Gastrocnemius medialis (tissue), 4 donors: ENCODE measurements at regions of chr7 and their contacts with region 1.

Region 1: GRCh38 chr7:45923290-45923689 is 2.2 kb upstream of the IGFBP3 start:
- DNase-seq: peak in 1 of 2 donors; percentile 43
- ATAC-seq: peak in 1 of 2 donors; percentile 54
- H3K4me3 ChIP-seq: peak overlapping the region in 3 of 4 donors; percentile 30 to 55 (median 34)
- H3K27ac ChIP-seq: peak overlapping the region in 3 of 4 donors; percentile 33 to 64 (median 53)
- H3K4me1 ChIP-seq: peaks cover 7 to 25% of the 10 kb centered on the region in 2 donors
- H3K27me3 ChIP-seq: peaks cover 38 to 47% (median 39%) of the 10 kb centered on the region in 3 donors
- CTCF ChIP-seq: peak; percentile 62 to 84 (median 69)
- POLR2A ChIP-seq: no peak

Region 2: DNA sequence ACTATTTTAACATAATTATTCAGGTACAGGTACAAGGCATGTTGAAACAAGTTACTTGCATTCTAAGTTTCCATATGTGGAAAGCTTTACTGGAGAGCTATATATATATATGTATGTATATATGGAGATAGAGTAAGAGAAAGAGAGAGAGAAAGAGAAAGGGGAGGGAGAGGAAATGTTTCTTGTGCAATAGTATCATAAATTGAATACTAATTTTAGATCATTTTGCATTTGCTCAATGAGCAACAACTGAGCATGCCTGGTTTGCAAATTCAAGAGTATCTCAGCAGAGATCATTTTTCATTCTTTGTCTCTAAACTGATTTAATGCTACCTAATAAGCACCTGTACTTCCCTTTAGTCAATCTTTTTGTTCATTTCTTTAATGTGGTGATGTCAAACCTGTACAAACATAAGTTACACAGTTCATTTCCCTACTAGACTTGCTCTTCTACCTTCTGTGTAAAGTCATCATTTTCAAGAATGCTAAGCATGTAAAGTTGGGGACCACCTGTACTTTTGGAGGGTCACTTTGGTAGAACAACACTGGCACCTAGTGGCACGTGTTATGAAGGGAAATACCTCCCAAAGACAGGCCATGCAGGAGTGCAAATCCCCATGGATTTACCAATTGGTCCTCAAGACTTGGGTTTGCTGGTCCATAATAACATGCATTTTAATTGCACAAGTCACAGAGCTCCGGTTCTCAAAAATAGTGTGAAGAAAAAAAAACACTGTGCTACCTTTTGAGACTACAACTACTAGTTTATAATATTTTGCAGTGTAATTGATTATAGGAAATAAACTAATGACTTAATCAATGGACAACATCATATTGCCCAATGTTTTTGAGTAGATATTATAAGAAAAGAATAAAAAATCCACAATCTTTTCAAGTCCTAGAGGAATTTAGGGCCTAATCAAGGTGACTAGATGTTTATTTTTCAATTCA is 429.0 kb after region 1 on chr7:
- in situ Hi-C with region 1: loop called in 2 of 4 experiments (anchors 10 to 25 kb)
- intact Hi-C with region 1: loop called (anchors 10 kb)
- DNase-seq: no peak
- ATAC-seq: no peak
- H3K4me3 ChIP-seq: no peak overlapping the region
- H3K27ac ChIP-seq: no peak overlapping the region
- H3K4me1 ChIP-seq: no peaks in the 10 kb centered on the region
- H3K27me3 ChIP-seq: no peaks in the 10 kb centered on the region
- CTCF ChIP-seq: peak in 3 of 5 experiments; percentile 26 to 29 (median 28)
- POLR2A ChIP-seq: no peak

Region 3: DNA sequence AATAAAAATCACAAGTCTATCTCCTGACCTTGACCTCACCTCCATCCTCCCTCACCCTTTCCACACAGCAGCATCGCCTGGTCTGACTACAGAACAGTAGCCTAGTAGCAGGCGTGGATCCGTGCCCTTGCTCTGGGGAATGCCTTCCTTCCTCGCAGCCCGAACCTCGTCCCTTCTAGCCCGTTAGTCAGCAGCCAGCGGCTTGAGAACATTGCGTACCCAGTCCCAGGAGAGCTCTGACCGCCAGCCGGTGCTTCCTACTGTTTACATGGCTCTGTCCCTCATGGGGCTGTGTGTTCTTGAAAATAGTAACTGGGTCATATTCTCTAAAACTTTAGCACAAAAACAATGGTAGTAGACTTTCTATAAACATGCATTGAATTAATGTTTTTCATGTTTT is 680.5 kb after region 1 on chr7:
- in situ Hi-C with region 1: loop called in 1 of 4 experiments (anchors 5 kb)
- intact Hi-C with region 1: loop called (anchors 10 kb)
- DNase-seq: peak; percentile 93
- ATAC-seq: peak; percentile 86 to 89
- H3K4me3 ChIP-seq: no peak overlapping the region
- H3K27ac ChIP-seq: peak overlapping the region; percentile 72 to 90 (median 77)
- H3K4me1 ChIP-seq: peaks cover 23 to 32% of the 10 kb centered on the region in 2 donors
- H3K27me3 ChIP-seq: no peaks in the 10 kb centered on the region
- CTCF ChIP-seq: no peak
- POLR2A ChIP-seq: no peak

Region 4: DNA sequence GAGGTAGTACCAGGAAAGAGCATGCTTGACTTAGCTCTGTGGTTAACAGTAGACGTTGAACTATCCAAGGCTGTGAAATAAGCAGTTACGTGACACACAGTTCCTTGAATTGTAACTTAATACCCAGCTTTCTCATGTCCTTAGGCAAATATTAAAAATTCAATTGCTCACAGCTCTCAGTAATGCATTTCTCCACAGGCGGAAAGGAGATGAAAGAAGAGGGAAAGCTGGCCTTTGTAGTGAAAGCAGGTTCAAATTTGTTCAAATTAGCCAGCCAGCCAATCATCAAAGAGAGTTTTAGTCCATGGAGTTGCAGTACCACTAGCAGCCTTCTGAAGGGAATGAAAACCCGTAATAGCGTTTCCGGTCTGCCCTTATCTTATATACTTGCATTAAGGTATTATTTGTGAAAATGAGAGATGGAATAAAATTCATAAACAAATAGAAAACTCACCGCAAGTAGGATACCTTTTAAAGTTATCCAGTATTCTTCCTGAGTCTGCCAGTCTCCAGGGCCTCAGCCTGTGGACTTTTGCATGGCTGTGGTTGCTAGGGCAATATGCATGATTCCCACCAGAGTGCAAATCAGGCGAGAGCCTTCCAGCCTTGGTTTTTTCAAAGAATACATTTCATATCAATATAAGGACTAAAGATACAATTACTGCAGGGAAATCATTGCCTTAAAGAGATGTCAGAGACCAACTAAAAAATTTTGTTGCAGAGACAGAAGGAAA is 863.1 kb after region 1 on chr7:
- in situ Hi-C with region 1: no loop called
- intact Hi-C with region 1: loop called (anchors 10 kb)
- DNase-seq: no peak
- ATAC-seq: peak; percentile 56 to 58
- H3K4me3 ChIP-seq: no peak overlapping the region
- H3K27ac ChIP-seq: no peak overlapping the region
- H3K4me1 ChIP-seq: no peaks in the 10 kb centered on the region
- H3K27me3 ChIP-seq: no peaks in the 10 kb centered on the region
- CTCF ChIP-seq: no peak
- POLR2A ChIP-seq: no peak

Region 5: DNA sequence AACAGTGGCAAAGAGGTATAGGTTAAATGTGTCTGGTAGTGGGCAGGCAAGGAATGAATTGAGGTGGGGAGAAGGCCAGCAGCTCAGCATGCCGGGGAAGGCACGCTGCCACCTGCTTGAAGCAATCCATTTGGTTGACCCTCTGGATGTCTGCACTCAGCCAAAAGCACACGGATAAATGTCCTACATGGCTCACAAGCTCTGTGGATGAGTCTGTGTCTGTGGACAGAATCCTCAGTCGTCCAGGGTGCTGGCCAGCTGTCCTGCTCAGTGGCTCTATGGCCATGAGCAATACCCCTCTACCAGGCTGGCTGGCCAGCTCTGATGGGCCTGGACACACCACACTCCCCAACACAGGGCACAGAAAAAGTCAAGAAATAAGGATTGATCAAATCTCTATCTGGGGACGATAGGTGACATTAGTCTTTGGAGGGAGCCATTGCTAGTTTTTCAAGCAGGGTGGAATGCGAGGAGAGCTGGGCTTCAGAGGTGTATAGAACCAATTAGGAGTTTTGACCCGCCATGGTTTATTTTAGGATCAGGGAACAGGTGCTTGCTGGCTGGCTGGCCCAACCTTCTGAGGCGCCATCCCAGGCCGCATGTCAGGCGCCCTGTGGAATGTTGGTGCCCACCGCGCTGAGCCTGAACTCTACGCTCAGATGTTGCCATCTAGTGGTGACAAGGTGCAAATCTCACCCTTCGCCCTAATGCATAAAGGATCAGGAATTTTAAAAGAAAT is 1165.2 kb after region 1 on chr7:
- in situ Hi-C with region 1: loop called (anchors 5 to 10 kb)
- intact Hi-C with region 1: loop called (anchors 1 kb)
- DNase-seq: peak; percentile 23 to 67
- ATAC-seq: peak; percentile 84
- H3K4me3 ChIP-seq: no peak overlapping the region
- H3K27ac ChIP-seq: peak overlapping the region; percentile 26 to 66 (median 47)
- H3K4me1 ChIP-seq: peaks cover 10 to 13% of the 10 kb centered on the region in 2 donors
- H3K27me3 ChIP-seq: no peaks in the 10 kb centered on the region
- CTCF ChIP-seq: peak; percentile 78 to 90 (median 84)
- POLR2A ChIP-seq: no peak

Region 6: GRCh38 chr7:47179812-47180515 is 1256.7 kb after region 1 on chr7:
- in situ Hi-C with region 1: loop called (anchors 5 to 10 kb)
- intact Hi-C with region 1: loop called (anchors 2 kb)
- DNase-seq: peak in 1 of 2 donors; percentile 39
- ATAC-seq: peak; percentile 55 to 56
- H3K4me3 ChIP-seq: no peak overlapping the region
- H3K27ac ChIP-seq: no peak overlapping the region
- H3K4me1 ChIP-seq: peaks cover 26 to 44% of the 10 kb centered on the region in 2 donors
- H3K27me3 ChIP-seq: no peaks in the 10 kb centered on the region
- CTCF ChIP-seq: peak; percentile 69 to 89 (median 76)
- POLR2A ChIP-seq: no peak

Region 7: DNA sequence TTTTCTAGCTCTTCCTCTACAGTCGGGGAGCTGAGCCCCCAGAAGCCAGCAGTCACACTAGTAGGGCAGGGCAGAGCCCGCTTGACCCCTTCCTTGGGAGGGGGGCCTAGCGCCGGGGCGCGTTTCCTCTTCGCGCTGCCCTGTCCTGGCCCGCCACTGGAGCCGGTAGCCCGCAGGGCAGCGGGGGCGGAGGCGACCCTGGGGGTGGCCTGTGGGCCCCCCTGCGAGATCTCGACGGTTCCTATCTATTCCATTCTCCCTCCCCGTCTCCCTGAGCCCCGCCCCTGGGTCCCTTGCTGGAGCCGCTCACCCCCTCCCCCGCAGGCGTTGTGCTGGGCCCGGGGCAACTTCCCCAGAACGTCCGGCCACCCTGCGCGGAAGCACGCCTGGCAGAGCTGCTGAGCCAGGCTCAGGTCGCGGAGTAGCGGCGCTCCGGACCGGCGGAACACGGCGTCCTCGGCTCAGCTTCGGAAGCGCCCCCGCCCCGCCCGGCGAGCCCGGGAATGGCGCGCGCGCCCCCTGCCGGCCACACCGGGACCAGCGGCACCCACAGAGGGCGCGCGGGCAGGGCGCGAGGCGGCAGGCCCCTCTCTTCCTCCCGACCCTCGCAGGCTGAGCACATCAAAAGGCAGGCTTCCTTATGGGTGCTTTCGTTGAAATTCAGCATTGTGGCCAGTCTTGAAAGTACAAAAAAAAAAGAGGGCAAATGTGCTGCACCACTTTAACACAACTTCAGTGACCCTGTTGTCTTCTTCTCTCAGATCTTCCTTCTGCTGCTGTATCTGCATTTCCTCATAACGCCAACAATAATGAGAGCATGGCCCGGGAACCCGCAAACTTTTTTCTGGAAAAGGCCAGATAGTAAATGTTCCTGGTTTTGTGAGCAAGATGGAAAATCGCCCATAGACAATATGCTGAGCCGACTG is 1331.1 kb after region 1 on chr7:
- in situ Hi-C with region 1: loop called in 2 of 4 experiments (anchors 5 kb)
- intact Hi-C with region 1: loop called (anchors 2 kb)
- DNase-seq: peak; percentile 85
- ATAC-seq: peak; percentile 81 to 83
- H3K4me3 ChIP-seq: peak overlapping the region; percentile 60 to 70 (median 68)
- H3K27ac ChIP-seq: peak overlapping the region; percentile 90 to 96 (median 94)
- H3K4me1 ChIP-seq: peaks cover 16 to 20% of the 10 kb centered on the region in 2 donors
- H3K27me3 ChIP-seq: no peaks in the 10 kb centered on the region
- CTCF ChIP-seq: peak; percentile 79 to 100 (median 97)
- POLR2A ChIP-seq: peak in 1 of 2 donors; percentile 39